Caco-2 (cell line): ENCODE measurements at regions of chr5 and their contacts with region 1.

Region 1: GRCh38 chr5:142145106-142145900 is 36.7 kb downstream of the NDFIP1 start:
- DNase-seq: peak; percentile 69 to 72
- H3K4me3 ChIP-seq: no peak overlapping the region
- H3K4me3 Mint-ChIP-seq: no peak overlapping the region
- H3K27ac Mint-ChIP-seq: no peak overlapping the region
- H3K4me1 ChIP-seq: no peaks in the 10 kb centered on the region
- H3K4me1 Mint-ChIP-seq: no peaks in the 10 kb centered on the region
- H3K27me3 ChIP-seq: no peaks in the 10 kb centered on the region
- H3K27me3 Mint-ChIP-seq: no peaks in the 10 kb centered on the region
- CTCF ChIP-seq: peak; percentile 60 to 82

Region 2: GRCh38 chr5:141691867-141692532 is 453.3 kb before region 1 on chr5:
- CTCF ChIA-PET with region 1: no interaction called
- POLR2A ChIA-PET with region 1: no interaction called
- intact Hi-C with region 1: loop called (anchors 5 kb)
- DNase-seq: peak; percentile 81 to 92
- H3K4me3 ChIP-seq: peak overlapping the region; percentile 39
- H3K4me3 Mint-ChIP-seq: peak overlapping the region; percentile 71
- H3K27ac Mint-ChIP-seq: no peak overlapping the region
- H3K4me1 ChIP-seq: no peaks in the 10 kb centered on the region
- H3K4me1 Mint-ChIP-seq: no peaks in the 10 kb centered on the region
- H3K27me3 ChIP-seq: no peaks in the 10 kb centered on the region; the same call in 1 of the 2 replicates
- H3K27me3 Mint-ChIP-seq: peaks cover 7% of the 10 kb centered on the region
- CTCF ChIP-seq: peak; percentile 88 to 97

Region 3: DNA sequence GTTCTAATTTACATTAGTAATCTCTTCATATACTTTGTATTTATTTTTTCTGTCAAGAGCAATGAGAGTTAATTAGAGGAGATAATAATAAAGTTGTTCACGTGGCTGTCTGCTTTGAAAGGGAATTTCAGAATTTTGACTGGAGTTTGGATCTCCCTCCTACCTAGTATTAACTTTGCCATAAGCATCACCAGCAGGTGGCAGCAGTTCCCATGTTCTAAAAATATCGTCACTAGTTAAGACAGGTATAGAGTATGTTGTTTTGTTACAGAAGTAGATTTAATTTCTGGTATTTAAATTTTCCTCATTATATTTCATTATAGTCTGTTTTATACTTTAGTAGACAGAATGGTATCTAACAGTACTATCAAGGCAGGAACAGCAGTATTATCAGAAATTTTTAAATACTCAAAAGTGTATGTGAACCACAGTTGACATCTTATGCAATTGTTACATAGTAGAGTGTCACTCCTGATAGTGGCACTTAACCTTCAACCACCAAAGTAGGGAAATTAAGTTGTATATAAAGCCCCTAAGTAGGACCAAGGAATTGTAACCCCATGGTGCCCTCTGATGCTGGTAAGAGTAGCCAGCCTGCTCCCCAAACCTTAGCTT is 152.8 kb before region 1 on chr5:
- CTCF ChIA-PET with region 1: interaction called, 17 read pairs
- POLR2A ChIA-PET with region 1: no interaction called
- intact Hi-C with region 1: loop called (anchors 1 kb)
- DNase-seq: peak; percentile 69 to 72
- H3K4me3 ChIP-seq: no peak overlapping the region
- H3K4me3 Mint-ChIP-seq: no peak overlapping the region
- H3K27ac Mint-ChIP-seq: no peak overlapping the region
- H3K4me1 ChIP-seq: no peaks in the 10 kb centered on the region
- H3K4me1 Mint-ChIP-seq: no peaks in the 10 kb centered on the region
- H3K27me3 ChIP-seq: no peaks in the 10 kb centered on the region
- H3K27me3 Mint-ChIP-seq: no peaks in the 10 kb centered on the region
- CTCF ChIP-seq: peak; percentile 65 to 70

Region 4: DNA sequence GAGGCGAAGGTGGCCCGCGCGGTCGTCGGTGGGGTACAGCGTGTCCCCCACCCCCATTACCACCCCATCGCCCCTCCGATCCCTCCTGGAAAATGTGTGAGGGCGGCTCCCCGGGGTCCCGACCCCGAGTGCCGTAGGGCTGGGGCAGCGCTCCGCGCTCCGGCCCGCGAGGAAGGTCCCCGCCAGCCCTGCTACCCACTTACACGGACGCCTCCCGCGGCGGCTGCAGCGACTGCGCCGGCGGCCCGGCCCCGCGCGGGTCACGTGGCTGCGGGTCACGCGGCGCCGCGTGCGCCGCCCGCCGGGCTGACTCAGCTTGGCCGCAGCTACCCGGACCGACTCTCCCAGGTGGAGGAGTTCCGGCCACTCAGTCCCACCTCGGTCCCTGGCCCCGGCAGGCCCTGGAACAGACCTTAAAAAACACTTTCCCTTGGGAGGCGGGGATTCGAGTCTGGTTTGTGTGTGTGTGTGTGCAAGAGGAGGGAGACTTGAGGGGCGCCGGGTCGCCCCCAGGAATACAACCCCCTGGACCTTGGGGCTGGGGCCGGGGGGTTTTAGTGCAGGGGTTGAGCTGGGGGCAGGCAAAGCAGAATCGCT is 132.4 kb before region 1 on chr5 and contains the start of gene GNPDA1:
- CTCF ChIA-PET with region 1: interaction called, 19 read pairs
- POLR2A ChIA-PET with region 1: no interaction called
- intact Hi-C with region 1: loop called (anchors 1 kb)
- DNase-seq: peak; percentile 79 to 86
- H3K4me3 ChIP-seq: peak within 1 kb of the TSS; percentile 87
- H3K4me3 Mint-ChIP-seq: peak within 1 kb of the TSS; percentile 85
- H3K27ac Mint-ChIP-seq: peak within 1 kb of the TSS; percentile 94
- H3K4me1 ChIP-seq: peaks cover 4% of the 10 kb centered on the region; the same call in 1 of the 2 replicates
- H3K4me1 Mint-ChIP-seq: peaks cover 7% of the 10 kb centered on the region
- H3K27me3 ChIP-seq: no peaks in the 10 kb centered on the region
- H3K27me3 Mint-ChIP-seq: no peaks in the 10 kb centered on the region
- CTCF ChIP-seq: no peak
- total RNA-seq, gene GNPDA1: 61.3 and 70.9 TPM in 2 replicates

Region 5: DNA sequence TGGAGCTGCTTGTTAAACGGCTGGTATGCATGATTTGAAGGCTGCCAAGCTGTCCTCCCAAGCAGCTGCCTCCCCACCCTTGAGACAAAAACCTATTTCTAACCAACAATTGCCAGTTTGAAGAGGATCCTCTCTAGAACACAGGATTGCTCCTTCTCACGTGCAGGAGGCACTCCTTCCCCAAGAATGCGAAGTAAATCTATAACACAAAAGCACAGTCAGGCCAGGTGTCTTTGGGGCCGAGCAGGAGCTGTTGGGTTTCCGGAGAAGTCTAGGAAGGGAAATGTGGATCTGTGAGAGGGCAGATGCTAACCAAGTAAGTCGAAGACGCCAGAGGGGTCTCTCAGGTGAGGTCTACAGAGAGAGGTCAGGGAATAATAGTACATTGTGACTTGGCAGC is 97.0 kb before region 1 on chr5:
- CTCF ChIA-PET with region 1: interaction called, 11 read pairs
- POLR2A ChIA-PET with region 1: no interaction called
- intact Hi-C with region 1: loop called (anchors 1 kb)
- DNase-seq: peak in 1 of 2 experiments; percentile 21
- H3K4me3 ChIP-seq: no peak overlapping the region
- H3K4me3 Mint-ChIP-seq: no peak overlapping the region
- H3K27ac Mint-ChIP-seq: peak overlapping the region; percentile 37
- H3K4me1 ChIP-seq: no peaks in the 10 kb centered on the region
- H3K4me1 Mint-ChIP-seq: peaks cover 8% of the 10 kb centered on the region
- H3K27me3 ChIP-seq: no peaks in the 10 kb centered on the region
- H3K27me3 Mint-ChIP-seq: no peaks in the 10 kb centered on the region
- CTCF ChIP-seq: peak in 1 of 2 experiments; percentile 34

Region 6: GRCh38 chr5:142108432-142109330 is 36.6 kb before region 1 on chr5 and contains the start of gene NDFIP1:
- CTCF ChIA-PET with region 1: no interaction called
- POLR2A ChIA-PET with region 1: no interaction called
- intact Hi-C with region 1: loop called (anchors 2 kb)
- DNase-seq: peak; percentile 82 to 92
- H3K4me3 ChIP-seq: peak within 1 kb of the TSS; percentile 86
- H3K4me3 Mint-ChIP-seq: peak within 1 kb of the TSS; percentile 93
- H3K27ac Mint-ChIP-seq: peak within 1 kb of the TSS; percentile 82
- H3K4me1 ChIP-seq: peaks cover 15% of the 10 kb centered on the region
- H3K4me1 Mint-ChIP-seq: no peaks in the 10 kb centered on the region
- H3K27me3 ChIP-seq: no peaks in the 10 kb centered on the region
- H3K27me3 Mint-ChIP-seq: no peaks in the 10 kb centered on the region
- CTCF ChIP-seq: peak in 1 of 2 experiments; percentile 1
- total RNA-seq, gene NDFIP1: 49.0 and 51.6 TPM in 2 replicates